Left ventricle myocardium inferior (tissue), 1 donor: ENCODE measurements at regions of chr13 and their contacts with region 1.

Region 1: GRCh38 chr13:97109841-97110492 is 112.2 kb upstream of the MBNL2 start:
- DNase-seq: peak; percentile 91
- H3K4me3 ChIP-seq: peak overlapping the region; percentile 49
- H3K27ac ChIP-seq: peak overlapping the region; percentile 46
- H3K4me1 ChIP-seq: peaks cover 30% of the 10 kb centered on the region
- H3K27me3 ChIP-seq: no peaks in the 10 kb centered on the region
- CTCF ChIP-seq: peak; percentile 98

Region 2: GRCh38 chr13:96898646-96899254 is 211.2 kb before region 1 on chr13:
- intact Hi-C with region 1: no loop called
- DNase-seq: no peak
- H3K4me3 ChIP-seq: peak overlapping the region; percentile 12
- H3K27ac ChIP-seq: no peak overlapping the region
- H3K4me1 ChIP-seq: no peaks in the 10 kb centered on the region
- H3K27me3 ChIP-seq: no peaks in the 10 kb centered on the region
- CTCF ChIP-seq: no peak

Region 3: DNA sequence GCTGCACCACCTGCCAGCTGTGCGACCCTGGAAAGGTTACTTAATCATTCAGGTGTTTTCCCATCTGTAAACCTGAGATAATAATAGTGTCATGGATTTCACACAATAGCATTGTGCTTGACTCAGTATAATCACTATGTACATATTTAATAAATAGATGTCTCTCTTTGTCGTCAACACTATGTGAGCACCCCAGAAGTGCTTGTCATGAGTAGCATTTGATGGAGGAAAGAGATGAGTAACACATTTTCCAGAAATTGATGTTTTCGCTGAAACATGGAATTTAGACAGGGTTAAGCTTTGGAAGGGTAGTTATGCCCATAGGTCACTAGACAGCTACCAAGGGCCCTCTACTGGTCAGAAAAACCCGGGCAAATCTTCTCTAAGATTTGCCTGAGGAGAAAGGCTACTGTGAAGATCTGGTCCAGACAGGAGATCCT is 102.7 kb after region 1 on chr13:
- intact Hi-C with region 1: loop called (anchors 5 kb)
- DNase-seq: no peak
- H3K4me3 ChIP-seq: no peak overlapping the region
- H3K27ac ChIP-seq: no peak overlapping the region
- H3K4me1 ChIP-seq: peaks cover 9% of the 10 kb centered on the region
- H3K27me3 ChIP-seq: no peaks in the 10 kb centered on the region
- CTCF ChIP-seq: peak; percentile 72

Region 4: GRCh38 chr13:97359181-97360057 is 249.5 kb after region 1 on chr13:
- intact Hi-C with region 1: loop called (anchors 5 kb)
- DNase-seq: no peak
- H3K4me3 ChIP-seq: no peak overlapping the region
- H3K27ac ChIP-seq: peak overlapping the region; percentile 20
- H3K4me1 ChIP-seq: peaks cover 55% of the 10 kb centered on the region
- H3K27me3 ChIP-seq: no peaks in the 10 kb centered on the region
- CTCF ChIP-seq: peak; percentile 91

Region 5: DNA sequence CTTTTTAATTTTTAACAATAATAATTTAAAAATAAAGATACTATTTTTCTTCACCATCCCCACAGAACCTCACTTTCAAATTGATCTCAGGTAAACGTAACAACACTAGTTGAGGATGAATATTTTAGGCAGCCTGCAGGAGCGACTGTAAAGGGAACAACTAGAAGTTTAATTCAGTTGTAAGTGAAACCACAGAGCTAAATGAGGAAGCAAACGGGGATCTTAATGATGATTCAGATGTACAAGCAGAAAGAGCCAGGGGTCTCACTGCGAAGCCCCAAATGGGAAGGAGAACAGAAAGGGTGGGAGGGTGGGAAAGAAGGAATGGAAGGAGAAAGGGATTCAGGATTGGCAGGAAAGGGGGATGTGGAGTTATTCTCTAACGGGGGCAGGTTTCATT is 269.4 kb after region 1 on chr13:
- intact Hi-C with region 1: no loop called
- DNase-seq: no peak
- H3K4me3 ChIP-seq: no peak overlapping the region
- H3K27ac ChIP-seq: no peak overlapping the region
- H3K4me1 ChIP-seq: peaks cover 9% of the 10 kb centered on the region
- H3K27me3 ChIP-seq: no peaks in the 10 kb centered on the region
- CTCF ChIP-seq: no peak